CD8-positive, alpha-beta memory T cell (primary cell): ENCODE measurements at regions of chr10 and their contacts with region 1.

Region 1: GRCh38 chr10:108303149-108303548 is 1138.6 kb upstream of the SORCS1 start:
- DNase-seq: no peak
- H3K4me3 ChIP-seq: no peak overlapping the region
- H3K4me3 Mint-ChIP-seq: no peak overlapping the region
- H3K27ac ChIP-seq: no peak overlapping the region
- H3K27ac Mint-ChIP-seq: no peak overlapping the region
- H3K4me1 ChIP-seq: no peaks in the 10 kb centered on the region
- H3K4me1 Mint-ChIP-seq: no peaks in the 10 kb centered on the region
- H3K27me3 ChIP-seq: no peaks in the 10 kb centered on the region
- H3K27me3 Mint-ChIP-seq: no peaks in the 10 kb centered on the region

Region 2: GRCh38 chr10:107442035-107442505 is 861.1 kb before region 1 on chr10:
- CTCF ChIA-PET with region 1: no interaction called
- POLR2A ChIA-PET with region 1: interaction called, 10 read pairs
- DNase-seq: no peak
- H3K4me3 ChIP-seq: no peak overlapping the region
- H3K4me3 Mint-ChIP-seq: no peak overlapping the region
- H3K27ac ChIP-seq: no peak overlapping the region
- H3K27ac Mint-ChIP-seq: no peak overlapping the region
- H3K4me1 ChIP-seq: no peaks in the 10 kb centered on the region
- H3K4me1 Mint-ChIP-seq: no peaks in the 10 kb centered on the region
- H3K27me3 ChIP-seq: no peaks in the 10 kb centered on the region
- H3K27me3 Mint-ChIP-seq: no peaks in the 10 kb centered on the region

Region 3: GRCh38 chr10:107686095-107686494 is 617.1 kb before region 1 on chr10:
- CTCF ChIA-PET with region 1: no interaction called
- POLR2A ChIA-PET with region 1: no interaction called
- DNase-seq: no peak
- H3K4me3 ChIP-seq: no peak overlapping the region
- H3K4me3 Mint-ChIP-seq: no peak overlapping the region
- H3K27ac ChIP-seq: no peak overlapping the region
- H3K27ac Mint-ChIP-seq: no peak overlapping the region
- H3K4me1 ChIP-seq: no peaks in the 10 kb centered on the region
- H3K4me1 Mint-ChIP-seq: no peaks in the 10 kb centered on the region
- H3K27me3 ChIP-seq: no peaks in the 10 kb centered on the region
- H3K27me3 Mint-ChIP-seq: no peaks in the 10 kb centered on the region

Region 4: GRCh38 chr10:108327706-108328105 is 24.6 kb after region 1 on chr10:
- CTCF ChIA-PET with region 1: no interaction called
- POLR2A ChIA-PET with region 1: no interaction called
- DNase-seq: no peak
- H3K4me3 ChIP-seq: no peak overlapping the region
- H3K4me3 Mint-ChIP-seq: no peak overlapping the region
- H3K27ac ChIP-seq: no peak overlapping the region
- H3K27ac Mint-ChIP-seq: no peak overlapping the region
- H3K4me1 ChIP-seq: no peaks in the 10 kb centered on the region
- H3K4me1 Mint-ChIP-seq: no peaks in the 10 kb centered on the region
- H3K27me3 ChIP-seq: no peaks in the 10 kb centered on the region
- H3K27me3 Mint-ChIP-seq: no peaks in the 10 kb centered on the region

Region 5: DNA sequence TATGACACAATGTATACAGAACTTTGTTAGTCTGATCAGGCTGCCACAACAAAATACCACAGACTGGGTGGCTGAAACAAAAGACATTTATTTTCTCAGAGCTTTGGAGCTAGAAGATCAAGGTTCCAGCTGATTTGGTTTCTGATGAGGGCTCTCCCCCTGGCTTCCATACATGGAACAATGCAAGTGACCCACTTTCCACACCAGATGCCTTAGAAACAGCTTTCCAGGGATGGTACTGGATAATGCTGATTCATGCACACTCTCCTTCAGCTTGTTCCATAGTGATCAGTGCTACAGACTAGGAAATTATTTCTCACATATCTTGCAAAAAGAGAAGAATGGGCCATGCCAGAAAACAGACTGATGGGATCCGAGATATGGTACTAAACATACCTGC is 136.2 kb after region 1 on chr10:
- CTCF ChIA-PET with region 1: no interaction called
- POLR2A ChIA-PET with region 1: no interaction called
- DNase-seq: no peak
- H3K4me3 ChIP-seq: no peak overlapping the region
- H3K4me3 Mint-ChIP-seq: no peak overlapping the region
- H3K27ac ChIP-seq: no peak overlapping the region
- H3K27ac Mint-ChIP-seq: no peak overlapping the region
- H3K4me1 ChIP-seq: no peaks in the 10 kb centered on the region
- H3K4me1 Mint-ChIP-seq: no peaks in the 10 kb centered on the region
- H3K27me3 ChIP-seq: no peaks in the 10 kb centered on the region
- H3K27me3 Mint-ChIP-seq: no peaks in the 10 kb centered on the region